ENCODE measurements at regions of chr12 and their contacts with region 1.

Region 1: GRCh38 chr12:6116175-6117021 is 8.1 kb downstream of the VWF start:
- DNase-seq: peak; percentile 47 to 60
- ATAC-seq: peak; percentile 42 to 73 (median 64)
- H3K4me3 ChIP-seq: peak overlapping the region in 4 of 10 donors; percentile 8 to 20 (median 16)
- H3K27ac ChIP-seq: peak overlapping the region; percentile 54 to 91 (median 89)
- H3K4me1 ChIP-seq: peaks cover 3 to 75% (median 23%) of the 10 kb centered on the region in 9 donors
- H3K27me3 ChIP-seq: peaks cover 0 to 4% (median 0%) of the 10 kb centered on the region in 7 donors
- CTCF ChIP-seq: no peak

Region 2: DNA sequence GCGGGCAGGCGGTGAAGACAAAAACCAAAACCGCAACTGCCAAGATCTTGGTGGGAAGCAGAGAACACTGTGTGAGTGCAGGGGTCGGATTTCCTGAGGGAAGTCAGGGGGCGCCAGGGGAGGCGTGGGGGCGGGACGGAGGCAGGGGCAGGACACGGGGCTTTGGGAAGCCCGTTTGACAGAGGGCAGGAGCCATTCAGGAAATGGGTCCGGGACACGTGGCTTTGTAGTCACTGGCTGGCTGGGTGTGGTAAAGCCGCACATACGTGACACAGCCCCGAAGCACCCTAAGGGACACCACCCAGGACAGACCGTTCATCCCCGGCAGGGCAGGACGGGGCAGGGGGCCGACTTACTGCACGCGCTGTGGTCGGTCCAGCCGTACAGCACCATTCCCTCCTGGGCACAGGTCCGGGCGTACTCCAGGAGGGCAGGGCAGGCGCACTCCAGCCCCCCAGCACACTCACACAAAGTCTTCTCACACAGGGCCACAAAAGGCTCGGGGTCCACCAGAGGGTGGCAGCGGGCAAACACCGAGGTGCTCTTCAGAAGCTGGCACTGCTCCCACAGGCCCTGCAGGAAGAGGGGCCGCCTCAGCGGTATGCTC is 41.3 kb before region 1 on chr12:
- intact Hi-C with region 1: loop called in 5 of 10 experiments (anchors 5 kb)
- DNase-seq: peak; percentile 44 to 47
- ATAC-seq: peak; percentile 34 to 71 (median 54)
- H3K4me3 ChIP-seq: peak overlapping the region in 9 of 10 donors; percentile 14 to 38 (median 24)
- H3K27ac ChIP-seq: peak overlapping the region; percentile 55 to 86 (median 74)
- H3K4me1 ChIP-seq: peaks cover 17 to 99% (median 55%) of the 10 kb centered on the region in 9 donors
- H3K27me3 ChIP-seq: peaks cover 0 to 41% (median 6%) of the 10 kb centered on the region in 7 donors
- CTCF ChIP-seq: peak in 1 of 9 donors; percentile 11

Region 3: DNA sequence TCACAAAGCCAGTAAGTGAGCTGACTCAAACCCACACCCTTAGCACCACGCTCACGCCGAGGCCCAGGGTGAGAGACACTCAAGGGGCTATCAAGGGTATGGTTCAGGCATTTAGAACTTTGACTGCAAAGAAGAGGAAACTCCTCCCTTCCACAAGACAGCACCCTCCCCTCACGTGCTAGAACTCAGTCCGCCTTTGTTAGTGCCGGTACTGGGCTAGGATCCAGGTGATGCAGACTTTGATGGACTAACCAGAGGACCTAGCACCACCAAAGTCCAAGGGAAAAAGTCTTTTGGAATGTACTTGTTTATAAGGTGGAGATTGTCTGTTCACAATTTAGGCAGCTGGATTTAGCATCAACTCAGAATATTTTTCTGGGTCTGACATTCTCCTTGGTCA is 25.6 kb before region 1 on chr12:
- intact Hi-C with region 1: loop called in 1 of 10 experiments (anchors 2 kb)
- DNase-seq: peak; percentile 30 to 80
- ATAC-seq: peak; percentile 66 to 84 (median 78)
- H3K4me3 ChIP-seq: no peak overlapping the region
- H3K27ac ChIP-seq: peak overlapping the region in 7 of 10 donors; percentile 29 to 78 (median 72)
- H3K4me1 ChIP-seq: peaks cover 17 to 97% (median 68%) of the 10 kb centered on the region in 9 donors
- H3K27me3 ChIP-seq: peaks cover 0 to 14% (median 0%) of the 10 kb centered on the region in 7 donors
- CTCF ChIP-seq: no peak

Measured in heart right ventricle (tissue), 16 donors.